ENCODE measurements at regions of chr4 and their contacts with region 1.

Region 1: GRCh38 chr4:57163530-57164459 is 53.6 kb upstream of the IGFBP7 start:
- DNase-seq: peak; percentile 60
- H3K4me3 ChIP-seq: peak overlapping the region; percentile 82
- H3K27ac ChIP-seq: no peak overlapping the region
- H3K27me3 ChIP-seq: peaks cover 9% of the 10 kb centered on the region
- CTCF ChIP-seq: peak; percentile 83

Region 2: DNA sequence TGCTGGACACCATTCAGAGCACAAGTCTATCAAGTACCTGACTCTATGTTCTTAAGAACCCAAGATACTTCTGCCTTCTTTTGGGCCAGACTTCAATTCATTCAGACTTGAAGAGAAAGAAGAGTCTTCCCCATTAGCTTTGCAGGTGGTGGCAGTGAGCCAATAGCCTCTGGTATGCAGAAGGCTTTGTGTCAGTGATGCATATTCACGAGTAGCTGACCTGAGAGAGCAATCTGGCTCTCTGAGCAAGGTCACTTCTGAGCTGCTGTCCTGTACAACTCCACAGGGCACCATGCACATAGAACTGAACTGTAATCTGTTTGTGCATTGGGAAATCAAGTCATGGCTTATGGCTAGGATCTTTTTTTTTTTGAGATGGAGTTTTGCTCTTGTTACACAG is 302.4 kb before region 1 on chr4:
- CTCF ChIA-PET with region 1: no interaction called
- POLR2A ChIA-PET with region 1: no interaction called
- DNase-seq: no peak
- H3K4me3 ChIP-seq: no peak overlapping the region
- H3K27ac ChIP-seq: no peak overlapping the region
- H3K27me3 ChIP-seq: peaks cover 6% of the 10 kb centered on the region
- CTCF ChIP-seq: no peak

Region 3: GRCh38 chr4:57020467-57021101 is 143.2 kb before region 1 on chr4:
- CTCF ChIA-PET with region 1: interaction called, 22 read pairs
- POLR2A ChIA-PET with region 1: no interaction called
- DNase-seq: peak; percentile 49
- H3K4me3 ChIP-seq: no peak overlapping the region
- H3K27ac ChIP-seq: no peak overlapping the region
- H3K27me3 ChIP-seq: no peaks in the 10 kb centered on the region
- CTCF ChIP-seq: no peak

Region 4: GRCh38 chr4:57064811-57065711 is 98.7 kb before region 1 on chr4:
- CTCF ChIA-PET with region 1: interaction called, 23 read pairs
- POLR2A ChIA-PET with region 1: no interaction called
- DNase-seq: peak; percentile 84
- H3K4me3 ChIP-seq: peak overlapping the region; percentile 31
- H3K27ac ChIP-seq: peak overlapping the region; percentile 88
- H3K27me3 ChIP-seq: no peaks in the 10 kb centered on the region
- CTCF ChIP-seq: no peak

Region 5: DNA sequence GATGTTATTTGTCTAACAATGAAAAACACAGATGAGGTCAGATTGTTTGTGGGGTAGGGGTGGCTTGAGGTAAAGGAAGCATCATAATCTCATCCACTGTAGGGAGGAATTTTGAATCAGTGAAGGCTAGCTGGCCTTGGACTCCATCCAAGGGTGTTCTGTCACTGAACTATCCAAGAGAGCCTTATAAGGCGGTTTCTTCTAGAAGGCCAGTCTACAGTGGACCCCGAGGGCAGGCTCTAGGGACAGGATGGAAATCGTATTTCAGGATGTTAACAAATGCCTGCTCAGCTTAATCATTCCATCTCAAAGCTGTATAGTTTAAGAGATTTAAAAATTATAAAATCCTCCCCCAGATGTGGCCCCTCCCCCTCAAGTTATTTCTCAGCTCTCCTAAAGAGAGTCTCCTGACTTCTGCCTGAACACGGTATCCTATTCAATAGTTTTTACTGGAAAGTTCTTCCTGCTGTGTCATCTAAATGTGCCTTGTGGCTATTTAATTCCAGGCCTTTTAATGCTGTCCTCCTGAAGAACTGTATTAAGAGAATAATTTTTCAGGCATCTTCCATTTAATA is 61.7 kb before region 1 on chr4:
- CTCF ChIA-PET with region 1: interaction called, 24 read pairs
- POLR2A ChIA-PET with region 1: no interaction called
- DNase-seq: peak; percentile 68
- H3K4me3 ChIP-seq: no peak overlapping the region
- H3K27ac ChIP-seq: peak overlapping the region; percentile 69
- H3K27me3 ChIP-seq: no peaks in the 10 kb centered on the region
- CTCF ChIP-seq: no peak

Region 6: GRCh38 chr4:57147335-57148060 is 16.3 kb before region 1 on chr4:
- CTCF ChIA-PET with region 1: interaction called, 63 read pairs
- POLR2A ChIA-PET with region 1: no interaction called
- DNase-seq: no peak
- H3K4me3 ChIP-seq: no peak overlapping the region
- H3K27ac ChIP-seq: no peak overlapping the region
- H3K27me3 ChIP-seq: no peaks in the 10 kb centered on the region
- CTCF ChIP-seq: no peak

Region 7: GRCh38 chr4:57233386-57233785 is 69.6 kb after region 1 on chr4:
- CTCF ChIA-PET with region 1: interaction called, 10 read pairs
- POLR2A ChIA-PET with region 1: no interaction called
- DNase-seq: peak; percentile 1
- H3K4me3 ChIP-seq: no peak overlapping the region
- H3K27ac ChIP-seq: no peak overlapping the region
- H3K27me3 ChIP-seq: no peaks in the 10 kb centered on the region
- CTCF ChIP-seq: no peak